Activated CD4-positive, alpha-beta memory T cell treated with anti-CD3 and anti-CD28 coated beads for 36 hours (primary cell): ENCODE measurements at regions of chr10 and their contacts with region 1.

Region 1: GRCh38 chr10:23438550-23439441 is at the start of gene OTUD1:
- DNase-seq: peak; percentile 94
- H3K4me3 Mint-ChIP-seq: peak within 1 kb of the TSS; percentile 77
- H3K27ac Mint-ChIP-seq: peak within 1 kb of the TSS; percentile 79
- H3K4me1 Mint-ChIP-seq: peaks cover 30% of the 10 kb centered on the region
- H3K27me3 Mint-ChIP-seq: no peaks in the 10 kb centered on the region
- total RNA-seq, gene OTUD1: 11.6 to 12.0 TPM

Region 2: GRCh38 chr10:21525367-21526183 is 1913.2 kb before region 1 on chr10 and contains the start of gene SKIDA1:
- CTCF ChIA-PET with region 1: no interaction called
- POLR2A ChIA-PET with region 1: no interaction called
- intact Hi-C with region 1: loop called (anchors 10 kb)
- DNase-seq: peak; percentile 79
- H3K4me3 Mint-ChIP-seq: peak within 1 kb of the TSS; percentile 80
- H3K27ac Mint-ChIP-seq: peak within 1 kb of the TSS; percentile 90
- H3K4me1 Mint-ChIP-seq: peaks cover 30% of the 10 kb centered on the region
- H3K27me3 Mint-ChIP-seq: peaks cover 13% of the 10 kb centered on the region
- total RNA-seq, gene SKIDA1: 0.07 to 0.21 TPM

Region 3: DNA sequence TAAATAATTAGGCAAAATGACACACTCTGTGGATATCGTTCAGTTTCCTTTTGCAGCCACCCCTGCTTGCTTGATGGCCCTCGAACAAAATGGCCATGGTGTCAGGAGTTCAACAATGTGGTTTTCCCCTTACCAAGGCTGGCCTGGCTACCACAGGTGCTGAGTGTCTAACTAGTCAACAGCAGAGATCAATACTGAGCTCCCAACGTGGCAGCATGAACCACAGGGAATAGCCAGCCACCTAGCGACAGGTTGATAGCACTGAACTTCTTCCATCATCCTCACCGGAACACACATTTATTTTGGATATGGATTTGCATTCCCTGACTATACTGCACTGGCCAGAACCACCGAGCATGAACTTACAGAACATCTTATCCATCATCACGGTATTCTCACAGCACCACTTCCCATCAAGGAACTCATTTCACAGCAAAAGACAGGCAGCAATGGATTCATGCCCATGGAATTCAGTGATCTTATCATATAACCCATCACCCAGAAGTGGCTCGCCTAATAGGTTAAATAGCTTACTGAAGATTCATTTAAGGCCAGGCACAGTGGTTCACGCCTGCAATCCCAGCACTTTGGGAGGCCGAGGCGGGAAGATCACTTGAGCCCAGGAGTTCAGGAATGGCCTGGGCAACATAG is 100.5 kb before region 1 on chr10:
- CTCF ChIA-PET with region 1: interaction called, 3 read pairs
- POLR2A ChIA-PET with region 1: interaction called, 11 read pairs
- intact Hi-C with region 1: no loop called
- DNase-seq: no peak
- H3K4me3 Mint-ChIP-seq: no peak overlapping the region
- H3K27ac Mint-ChIP-seq: no peak overlapping the region
- H3K4me1 Mint-ChIP-seq: peaks cover 73% of the 10 kb centered on the region
- H3K27me3 Mint-ChIP-seq: no peaks in the 10 kb centered on the region

Region 4: GRCh38 chr10:23413629-23414089 is 25.1 kb before region 1 on chr10:
- CTCF ChIA-PET with region 1: no interaction called
- POLR2A ChIA-PET with region 1: no interaction called
- intact Hi-C with region 1: loop called (anchors 2 kb)
- DNase-seq: no peak
- H3K4me3 Mint-ChIP-seq: no peak overlapping the region
- H3K27ac Mint-ChIP-seq: no peak overlapping the region
- H3K4me1 Mint-ChIP-seq: peaks cover 24% of the 10 kb centered on the region
- H3K27me3 Mint-ChIP-seq: no peaks in the 10 kb centered on the region

Region 5: GRCh38 chr10:23525406-23525805 is 86.6 kb after region 1 on chr10:
- CTCF ChIA-PET with region 1: interaction called, 3 read pairs
- POLR2A ChIA-PET with region 1: no interaction called
- intact Hi-C with region 1: loop called (anchors 5 kb)
- DNase-seq: peak; percentile 27
- H3K4me3 Mint-ChIP-seq: no peak overlapping the region
- H3K27ac Mint-ChIP-seq: no peak overlapping the region
- H3K4me1 Mint-ChIP-seq: no peaks in the 10 kb centered on the region
- H3K27me3 Mint-ChIP-seq: peaks cover 4% of the 10 kb centered on the region

Region 6: DNA sequence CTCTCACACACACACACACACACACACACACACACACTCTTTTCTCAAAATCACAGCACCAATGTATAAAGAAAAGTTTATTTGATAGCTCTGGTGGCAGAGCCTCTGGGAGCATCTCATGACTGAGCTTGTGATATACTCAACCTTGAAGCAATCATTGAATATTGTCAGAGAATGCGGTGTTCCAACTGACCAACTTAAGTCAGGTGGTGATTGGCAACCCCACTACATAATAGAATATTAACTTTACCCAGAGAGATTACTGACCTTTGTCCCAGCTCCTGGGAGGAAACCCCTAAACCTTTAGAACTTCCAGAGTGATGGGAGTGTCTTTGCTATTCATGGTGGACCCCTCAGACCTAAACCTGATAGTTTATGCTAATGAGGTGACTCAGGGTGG is 143.1 kb after region 1 on chr10:
- CTCF ChIA-PET with region 1: no interaction called
- POLR2A ChIA-PET with region 1: no interaction called
- intact Hi-C with region 1: no loop called
- DNase-seq: no peak
- H3K4me3 Mint-ChIP-seq: no peak overlapping the region
- H3K27ac Mint-ChIP-seq: no peak overlapping the region
- H3K4me1 Mint-ChIP-seq: no peaks in the 10 kb centered on the region
- H3K27me3 Mint-ChIP-seq: peaks cover 6% of the 10 kb centered on the region

Region 7: DNA sequence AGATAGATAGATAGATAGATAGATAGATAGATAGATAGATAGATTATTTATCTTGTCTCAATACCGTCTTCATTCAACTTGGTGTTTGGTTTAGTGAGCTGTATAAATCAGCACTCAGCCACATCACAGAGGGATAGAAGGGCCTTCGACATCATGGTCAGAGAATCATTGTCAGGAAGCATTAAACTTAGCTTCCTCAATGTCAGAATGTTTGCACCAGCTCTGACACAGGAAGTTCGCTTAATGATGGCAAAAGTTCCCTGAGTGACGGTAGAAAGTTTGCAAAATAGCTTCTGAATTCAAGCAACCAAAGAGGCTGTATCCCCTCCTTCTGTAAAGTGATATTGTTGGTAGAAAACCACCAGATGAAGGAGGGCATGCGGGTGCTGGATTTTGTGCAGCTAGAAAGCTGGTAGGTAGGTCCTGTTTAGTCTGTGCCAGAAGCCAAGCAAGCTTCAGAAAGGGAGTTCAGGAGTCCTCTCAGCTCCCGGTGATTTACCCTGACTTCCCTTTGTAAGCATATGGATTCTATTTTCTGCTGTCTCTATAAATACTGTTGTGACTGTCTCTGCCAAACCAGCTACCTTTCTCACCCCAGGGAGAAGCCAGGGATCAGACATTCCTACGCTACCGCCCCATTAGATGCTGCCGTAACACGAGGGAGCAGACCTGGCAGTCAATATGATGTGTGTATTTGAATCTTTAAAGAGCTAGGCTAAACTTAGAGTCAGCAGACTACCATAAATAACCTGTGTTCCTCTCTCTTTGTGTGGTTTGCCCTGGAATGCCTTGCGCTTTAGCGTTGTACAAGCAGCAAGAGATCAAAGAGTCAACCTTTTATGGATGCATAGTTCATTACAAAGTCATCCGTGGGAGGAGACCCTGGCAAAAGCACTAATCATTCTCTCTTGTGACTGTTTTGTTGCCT is 569.6 kb after region 1 on chr10:
- CTCF ChIA-PET with region 1: no interaction called
- POLR2A ChIA-PET with region 1: no interaction called
- intact Hi-C with region 1: no loop called
- DNase-seq: no peak
- H3K4me3 Mint-ChIP-seq: no peak overlapping the region
- H3K27ac Mint-ChIP-seq: no peak overlapping the region
- H3K4me1 Mint-ChIP-seq: no peaks in the 10 kb centered on the region
- H3K27me3 Mint-ChIP-seq: peaks cover 5% of the 10 kb centered on the region

Region 8: GRCh38 chr10:24724381-24725228 is 1285.8 kb after region 1 on chr10:
- CTCF ChIA-PET with region 1: no interaction called
- POLR2A ChIA-PET with region 1: no interaction called
- intact Hi-C with region 1: loop called (anchors 5 kb)
- DNase-seq: peak; percentile 97
- H3K4me3 Mint-ChIP-seq: peak overlapping the region; percentile 88
- H3K27ac Mint-ChIP-seq: peak overlapping the region; percentile 93
- H3K4me1 Mint-ChIP-seq: peaks cover 19% of the 10 kb centered on the region
- H3K27me3 Mint-ChIP-seq: no peaks in the 10 kb centered on the region

Region 9: DNA sequence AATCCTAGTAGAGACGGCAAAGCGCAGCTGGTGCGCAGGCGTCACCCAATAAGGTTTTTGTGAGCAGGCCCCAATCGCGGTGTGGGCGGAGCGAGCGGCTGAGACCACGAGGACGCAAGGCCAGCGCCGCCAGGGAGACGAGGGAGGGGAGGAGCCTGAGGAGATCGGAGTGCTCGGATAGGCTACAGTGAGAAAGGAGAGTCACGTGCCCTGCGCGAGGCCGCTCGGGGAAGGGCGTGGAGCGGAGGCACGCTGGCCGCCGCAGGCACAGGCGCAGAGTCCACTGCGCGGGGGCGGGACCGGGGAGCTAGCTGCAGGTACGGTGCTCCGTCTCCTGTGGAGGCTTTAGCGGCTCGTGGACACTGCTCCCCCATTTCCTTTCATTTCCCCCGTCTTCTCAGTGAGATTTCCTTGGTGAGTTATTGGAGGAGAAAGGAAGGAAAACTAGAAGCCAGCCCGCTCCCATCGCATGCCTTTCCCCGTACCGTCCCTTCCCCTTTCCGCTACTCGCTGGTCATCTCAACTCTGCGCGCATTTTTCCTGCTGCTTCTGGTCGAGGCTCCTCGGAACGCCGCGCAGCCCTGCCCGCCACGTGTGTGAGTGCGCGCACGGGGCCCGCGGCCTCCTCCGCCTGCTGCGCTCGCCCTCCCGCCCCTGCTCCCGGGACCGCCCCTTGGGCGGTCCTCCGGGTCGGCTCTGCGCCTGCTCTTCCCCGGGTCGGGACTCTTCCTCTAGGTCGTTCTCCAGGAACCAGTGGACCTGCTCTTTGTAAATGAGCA is 1577.8 kb after region 1 on chr10 and contains the start of gene THNSL1:
- CTCF ChIA-PET with region 1: no interaction called
- POLR2A ChIA-PET with region 1: no interaction called
- intact Hi-C with region 1: loop called (anchors 2 kb)
- DNase-seq: peak; percentile 99
- H3K4me3 Mint-ChIP-seq: peak within 1 kb of the TSS; percentile 94
- H3K27ac Mint-ChIP-seq: peak within 1 kb of the TSS; percentile 97
- H3K4me1 Mint-ChIP-seq: peaks cover 19% of the 10 kb centered on the region
- H3K27me3 Mint-ChIP-seq: no peaks in the 10 kb centered on the region
- total RNA-seq, gene THNSL1: 6.0 to 6.2 TPM